ENCODE measurements at regions of chr1 and their contacts with region 1.

Region 1: GRCh38 chr1:161021165-161021960 is 411 bp upstream of the F11R start:
- DNase-seq: peak; percentile 94
- H3K4me3 Mint-ChIP-seq: peak overlapping the region; percentile 94
- H3K27ac Mint-ChIP-seq: peak overlapping the region; percentile 86
- H3K4me1 Mint-ChIP-seq: peaks cover 38% of the 10 kb centered on the region
- H3K27me3 Mint-ChIP-seq: no peaks in the 10 kb centered on the region

Region 2: DNA sequence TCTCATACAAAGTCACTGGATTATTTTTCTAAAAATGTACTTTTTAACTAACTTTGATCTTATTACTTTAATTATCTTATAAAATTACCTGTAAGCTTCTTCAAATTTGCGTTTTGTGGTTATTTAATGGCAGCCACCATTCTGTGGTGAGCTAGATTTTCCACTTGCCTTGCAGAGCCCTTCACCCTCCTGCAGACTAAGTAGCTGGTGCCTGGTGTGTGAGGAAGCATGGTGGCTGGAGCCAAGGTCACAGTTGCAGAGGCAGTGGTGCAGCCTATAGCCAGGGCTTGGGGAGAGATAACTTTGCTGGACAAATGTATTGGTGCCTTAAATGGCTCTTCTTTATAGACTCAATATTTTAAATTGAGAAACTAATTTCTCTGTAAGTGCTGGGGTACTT is 430.9 kb before region 1 on chr1:
- intact Hi-C with region 1: no loop called
- DNase-seq: peak; percentile 44
- H3K4me3 Mint-ChIP-seq: no peak overlapping the region
- H3K27ac Mint-ChIP-seq: no peak overlapping the region
- H3K4me1 Mint-ChIP-seq: peaks cover 3% of the 10 kb centered on the region
- H3K27me3 Mint-ChIP-seq: no peaks in the 10 kb centered on the region

Region 3: GRCh38 chr1:161038523-161039153 is 17.3 kb after region 1 on chr1 and contains the start of gene TSTD1:
- intact Hi-C with region 1: loop called (anchors 2 kb)
- DNase-seq: peak; percentile 96
- H3K4me3 Mint-ChIP-seq: peak within 1 kb of the TSS; percentile 97
- H3K27ac Mint-ChIP-seq: peak within 1 kb of the TSS; percentile 93
- H3K4me1 Mint-ChIP-seq: peaks cover 32% of the 10 kb centered on the region
- H3K27me3 Mint-ChIP-seq: no peaks in the 10 kb centered on the region
- total RNA-seq, gene TSTD1: 41.7 and 49.7 TPM in 2 replicates

Measured in activated CD4-positive, alpha-beta T cell treated with anti-CD3 and anti-CD28 coated beads, Interleukin-2, amount 10 ng/mL, durations not matched to agents 24 days and 14 days (primary cell).